Sciatic nerve (tissue), 2 donors: ENCODE measurements at regions of chr21 and their contacts with region 1.

Region 1: GRCh38 chr21:35764586-35764985 is 295.7 kb downstream of the SETD4 start:
- DNase-seq: no peak
- ATAC-seq: no peak

Region 2: DNA sequence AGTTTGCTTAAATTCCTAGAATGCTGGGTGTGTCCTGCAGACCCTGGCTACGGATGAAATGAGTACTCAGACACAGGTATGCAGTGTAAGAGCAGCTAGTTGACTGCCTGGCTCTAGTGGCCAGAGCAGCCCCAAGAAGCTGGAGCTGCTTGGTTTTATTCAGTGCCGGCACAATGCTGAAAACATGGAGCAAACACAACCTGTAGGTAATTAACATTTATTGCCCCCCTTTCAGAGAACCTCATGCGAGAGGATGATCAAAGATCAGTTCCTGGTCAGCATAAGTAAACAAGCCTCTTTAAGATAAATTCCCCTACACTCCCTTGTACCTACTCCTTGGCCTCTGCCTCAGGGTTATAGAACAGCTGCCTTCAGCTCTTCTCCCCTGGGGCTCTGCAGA is 1648.0 kb before region 1 on chr21:
- intact Hi-C with region 1: loop called (anchors 5 kb)
- DNase-seq: no peak
- ATAC-seq: no peak

Region 3: DNA sequence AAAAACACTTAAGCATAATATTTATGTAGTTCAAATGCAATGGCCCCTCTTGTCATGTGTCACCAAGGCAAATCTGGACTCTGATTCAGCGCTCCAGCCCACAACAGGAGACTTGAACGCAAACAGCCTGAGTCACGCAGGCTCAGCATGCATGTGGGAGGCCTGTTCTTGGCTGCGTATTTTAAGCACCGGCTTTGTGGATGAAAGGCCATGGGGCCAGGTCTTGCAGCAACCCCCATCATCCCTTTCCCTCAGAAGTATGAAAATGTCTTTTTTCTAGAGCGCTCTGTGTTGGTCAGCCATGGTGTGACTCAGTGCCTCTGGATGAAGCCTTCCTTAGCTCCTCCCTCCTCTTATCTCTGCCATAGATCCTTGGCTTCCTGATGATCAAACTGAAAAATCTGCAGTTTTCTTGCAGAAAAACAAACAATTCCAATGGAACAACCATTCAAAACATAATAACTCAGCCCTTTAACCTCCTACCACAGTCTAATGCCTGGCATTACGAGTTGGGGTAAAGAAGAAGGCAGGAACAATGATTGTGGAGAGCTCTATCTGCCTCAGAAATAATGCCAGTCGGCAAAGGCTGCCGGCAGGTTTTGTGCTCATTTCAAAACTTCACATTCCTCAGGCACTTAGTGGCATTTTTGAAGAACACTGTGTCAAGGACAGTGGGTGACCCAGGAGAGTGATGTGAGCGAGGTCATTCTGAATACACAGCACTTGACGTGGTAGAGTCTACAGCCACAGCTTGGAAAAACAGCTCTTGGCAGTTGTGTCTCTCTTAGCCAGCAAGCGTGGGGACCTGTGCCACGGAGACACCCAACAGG is 928.3 kb before region 1 on chr21:
- intact Hi-C with region 1: no loop called
- DNase-seq: no peak
- ATAC-seq: peak; percentile 93

Region 4: DNA sequence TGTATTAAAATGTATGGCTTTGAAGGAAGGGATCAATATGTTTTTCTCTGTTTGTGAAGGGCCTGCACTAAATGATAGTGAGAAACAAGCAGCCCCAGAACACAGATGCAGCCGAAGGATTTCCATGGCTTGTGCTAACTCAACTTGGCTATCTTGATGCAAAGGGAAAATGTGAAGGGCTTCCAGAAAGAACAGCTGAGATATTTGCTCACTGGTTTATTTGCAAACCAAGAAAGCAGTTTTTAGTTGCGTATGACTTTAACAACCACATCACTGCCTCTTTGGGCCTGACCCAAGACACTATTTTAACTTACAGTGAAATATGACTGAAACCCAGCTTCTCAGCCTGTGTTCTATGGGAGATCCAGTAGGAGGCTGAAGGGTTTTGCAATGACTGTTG is 74.2 kb before region 1 on chr21:
- intact Hi-C with region 1: loop called (anchors 5 kb)
- DNase-seq: no peak
- ATAC-seq: no peak